Common myeloid progenitor, CD34-positive (primary cell): ENCODE measurements at regions of chr20 and their contacts with region 1.

Region 1: DNA sequence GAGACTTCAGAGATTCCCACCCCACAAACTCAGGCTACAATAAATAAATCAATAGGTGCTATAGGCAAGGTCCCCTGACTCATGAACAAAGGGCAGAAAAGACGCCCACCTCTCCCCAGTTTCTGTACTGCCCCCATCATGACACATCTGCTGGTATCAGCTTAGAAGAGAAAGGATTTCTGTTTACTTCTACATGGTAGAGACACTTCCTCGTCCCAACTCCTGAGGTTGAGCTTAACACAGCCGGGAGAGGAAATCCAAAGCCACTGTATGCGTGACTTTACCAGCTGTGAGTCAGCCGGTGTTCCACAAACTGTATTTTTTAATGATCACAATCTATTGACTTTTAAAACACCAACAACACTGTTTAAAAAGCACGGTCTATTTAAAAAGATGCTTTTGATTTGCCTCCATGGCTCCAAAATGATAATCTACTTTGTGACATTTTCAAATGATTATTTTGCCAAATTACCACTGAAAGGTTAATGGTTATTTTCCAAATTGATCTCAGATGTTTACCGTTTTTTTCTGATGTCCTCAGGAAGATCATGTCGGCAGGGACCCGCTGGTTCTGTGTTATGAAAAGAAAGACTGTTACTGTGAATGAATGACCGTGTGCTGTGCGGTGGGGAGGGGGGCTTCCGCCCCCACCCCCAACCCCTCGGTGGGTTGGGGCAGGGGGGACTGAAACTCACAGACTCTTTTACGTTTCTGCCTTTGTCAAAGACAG is 72.5 kb downstream of the ATP9A start:
- DNase-seq: peak; percentile 80 to 88 (median 81)
- H3K4me3 ChIP-seq: peak overlapping the region in 5 of 7 experiments; percentile 8 to 62 (median 55)
- H3K27ac ChIP-seq: peak overlapping the region; percentile 65 to 81
- H3K4me1 ChIP-seq: peaks cover 9 to 48% (median 26%) of the 10 kb centered on the region in 4 experiments
- H3K27me3 ChIP-seq: no peaks in the 10 kb centered on the region

Region 2: DNA sequence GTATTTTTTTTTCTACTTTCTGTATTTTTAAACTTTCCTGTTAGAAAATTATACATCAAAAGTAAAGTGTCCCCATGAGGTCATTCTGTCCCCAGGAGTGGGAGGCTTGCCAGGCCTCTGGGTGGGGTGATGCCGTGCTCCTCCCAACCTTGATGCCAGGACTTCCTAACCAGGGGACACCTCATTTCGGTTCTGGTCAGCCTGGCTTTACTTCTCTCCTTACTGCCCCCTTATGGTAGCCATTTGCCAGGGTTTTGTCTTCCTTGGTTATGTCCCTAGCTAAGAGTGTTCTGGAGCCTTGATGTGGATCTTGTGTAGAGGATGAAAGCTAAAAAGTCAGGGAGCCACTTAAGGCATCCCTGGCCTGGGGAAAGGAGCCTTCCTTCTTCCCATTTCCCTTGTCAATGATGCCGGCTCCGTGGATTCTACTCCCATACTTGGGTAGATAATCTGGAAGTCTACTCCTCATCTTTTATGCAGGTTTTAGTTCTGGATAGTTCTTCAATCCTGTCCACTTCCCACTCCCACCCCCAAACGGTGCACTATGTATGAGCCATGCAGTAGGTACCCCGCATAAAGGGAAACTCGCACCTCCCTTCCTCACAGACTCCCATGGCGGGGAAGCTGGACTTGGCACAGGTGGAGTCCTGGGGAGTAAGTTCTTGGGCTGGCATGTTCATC is 270.7 kb after region 1 on chr20:
- CTCF ChIA-PET with region 1: interaction called, 10 read pairs
- POLR2A ChIA-PET with region 1: no interaction called
- DNase-seq: peak; percentile 47 to 61 (median 57)
- H3K4me3 ChIP-seq: no peak overlapping the region
- H3K27ac ChIP-seq: no peak overlapping the region
- H3K4me1 ChIP-seq: peaks cover 0 to 2% (median 0%) of the 10 kb centered on the region in 4 experiments
- H3K27me3 ChIP-seq: no peaks in the 10 kb centered on the region

Region 3: DNA sequence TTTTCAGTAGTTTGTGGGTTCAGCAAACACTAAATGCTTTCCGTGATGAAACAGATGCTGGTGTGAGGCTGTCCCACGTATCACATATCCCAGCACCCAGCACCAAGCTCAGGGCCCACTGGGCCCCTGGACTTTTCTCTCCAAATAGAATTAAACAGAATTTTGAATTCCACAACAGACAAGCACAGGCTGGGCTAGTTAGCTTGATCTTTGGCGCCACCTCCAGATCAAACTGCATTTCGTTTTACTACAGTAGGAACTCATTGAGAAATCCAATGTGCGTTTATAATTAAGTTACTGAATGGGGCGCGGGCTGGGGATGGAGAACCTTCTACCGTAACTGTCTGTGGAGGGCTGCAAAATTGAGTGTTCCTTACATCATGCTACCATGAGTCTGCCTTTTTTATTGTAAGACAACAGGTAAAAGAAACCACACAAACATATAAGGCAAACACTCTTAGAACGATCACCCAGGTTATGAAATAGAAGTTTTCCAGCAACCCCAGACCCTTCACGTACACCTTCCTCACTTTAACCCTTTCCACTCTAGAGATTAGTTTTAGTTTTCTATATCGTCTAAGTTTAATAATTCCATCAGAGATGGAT is 388.0 kb after region 1 on chr20:
- CTCF ChIA-PET with region 1: interaction called, 17 read pairs
- POLR2A ChIA-PET with region 1: no interaction called
- DNase-seq: peak; percentile 65 to 84 (median 78)
- H3K4me3 ChIP-seq: no peak overlapping the region
- H3K27ac ChIP-seq: no peak overlapping the region
- H3K4me1 ChIP-seq: no peaks in the 10 kb centered on the region
- H3K27me3 ChIP-seq: no peaks in the 10 kb centered on the region